ENCODE measurements at regions of chr5 and their contacts with region 1.

Region 1: GRCh38 chr5:140875066-140876065 is at the start of gene PCDHA12:
- DNase-seq: peak; percentile 82
- ATAC-seq: peak; percentile 80
- H3K4me3 ChIP-seq: peak within 1 kb of the TSS; percentile 86
- H3K27ac ChIP-seq: peak within 1 kb of the TSS; percentile 42; the same call in 1 of the 2 replicates
- H3K4me1 ChIP-seq: peaks cover 14% of the 10 kb centered on the region
- H3K27me3 ChIP-seq: no peaks in the 10 kb centered on the region
- CTCF ChIP-seq: peak; percentile 67
- total RNA-seq, gene PCDHA12: 7.0 and 8.2 TPM in 2 replicates

Region 2: GRCh38 chr5:140806834-140807775 is 68.3 kb before region 1 on chr5 and contains the start of gene PCDHA4:
- CTCF ChIA-PET with region 1: no interaction called
- POLR2A ChIA-PET with region 1: no interaction called
- intact Hi-C with region 1: loop called (anchors 2 kb)
- DNase-seq: peak; percentile 59
- ATAC-seq: peak; percentile 89
- H3K4me3 ChIP-seq: peak within 1 kb of the TSS; percentile 72
- H3K27ac ChIP-seq: no peak within 1 kb of the TSS
- H3K4me1 ChIP-seq: no peaks in the 10 kb centered on the region
- H3K27me3 ChIP-seq: no peaks in the 10 kb centered on the region
- CTCF ChIP-seq: peak; percentile 57
- total RNA-seq, gene PCDHA4: 1.5 and 1.6 TPM in 2 replicates

Region 3: GRCh38 chr5:140855772-140856674 is 19.3 kb before region 1 on chr5 and contains the start of gene PCDHA10:
- CTCF ChIA-PET with region 1: no interaction called
- POLR2A ChIA-PET with region 1: no interaction called
- intact Hi-C with region 1: no loop called
- DNase-seq: no peak
- ATAC-seq: no peak
- H3K4me3 ChIP-seq: no peak within 1 kb of the TSS
- H3K27ac ChIP-seq: no peak within 1 kb of the TSS
- H3K4me1 ChIP-seq: no peaks in the 10 kb centered on the region
- H3K27me3 ChIP-seq: no peaks in the 10 kb centered on the region
- CTCF ChIP-seq: peak; percentile 24; the same call in 1 of the 2 replicates
- total RNA-seq, gene PCDHA10: 0.04 and 0.23 TPM in 2 replicates